ENCODE measurements at regions of chr2 and their contacts with region 1.

Region 1: GRCh38 chr2:226791487-226792081 is 8.0 kb downstream of the IRS1 start:
- DNase-seq: peak; percentile 95
- ATAC-seq: peak; percentile 93

Region 2: DNA sequence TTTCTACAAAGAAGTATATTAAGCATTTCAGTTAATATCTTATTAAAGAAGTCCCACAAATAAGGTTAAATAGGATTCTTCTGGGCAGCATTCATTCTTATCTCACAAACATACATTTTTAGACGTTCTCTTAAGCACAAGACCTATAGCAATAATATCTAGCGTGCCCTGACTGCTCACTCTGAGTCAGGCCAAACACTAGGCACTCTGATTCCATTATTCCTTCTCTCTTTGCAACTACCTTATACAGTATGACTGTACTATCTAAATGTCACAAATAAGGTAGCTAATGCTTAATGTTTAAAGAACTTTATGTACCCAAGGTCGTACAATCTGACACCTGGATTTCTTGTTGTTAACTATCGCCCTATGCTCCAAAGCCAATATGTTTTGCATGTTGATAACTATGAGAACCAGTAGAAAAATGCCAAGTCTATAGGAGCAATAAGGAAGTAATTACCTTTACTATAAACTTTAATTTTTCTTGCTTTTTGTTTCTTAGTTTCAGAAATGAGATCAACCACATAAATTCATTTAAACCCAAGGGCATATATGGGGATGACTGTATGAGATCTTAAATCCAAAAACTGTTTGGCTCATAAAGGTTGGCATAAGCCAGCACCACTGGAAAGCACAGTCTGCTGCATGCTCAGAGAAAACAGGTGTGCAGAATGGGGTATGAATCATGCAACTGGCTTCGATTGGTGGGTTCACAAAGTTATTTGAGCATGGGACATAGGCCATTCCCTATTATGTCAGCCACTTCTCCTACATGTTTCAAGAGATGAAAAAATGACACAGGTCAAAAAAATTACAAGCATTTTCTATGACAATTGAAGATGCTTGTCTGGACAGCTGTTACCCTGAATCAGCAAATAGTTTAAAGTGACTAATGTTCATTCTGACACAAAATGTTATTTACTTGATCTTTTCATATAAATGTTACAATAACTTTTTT is 344.0 kb before region 1 on chr2:
- intact Hi-C with region 1: loop called (anchors 10 kb)
- DNase-seq: no peak
- ATAC-seq: no peak

Region 3: DNA sequence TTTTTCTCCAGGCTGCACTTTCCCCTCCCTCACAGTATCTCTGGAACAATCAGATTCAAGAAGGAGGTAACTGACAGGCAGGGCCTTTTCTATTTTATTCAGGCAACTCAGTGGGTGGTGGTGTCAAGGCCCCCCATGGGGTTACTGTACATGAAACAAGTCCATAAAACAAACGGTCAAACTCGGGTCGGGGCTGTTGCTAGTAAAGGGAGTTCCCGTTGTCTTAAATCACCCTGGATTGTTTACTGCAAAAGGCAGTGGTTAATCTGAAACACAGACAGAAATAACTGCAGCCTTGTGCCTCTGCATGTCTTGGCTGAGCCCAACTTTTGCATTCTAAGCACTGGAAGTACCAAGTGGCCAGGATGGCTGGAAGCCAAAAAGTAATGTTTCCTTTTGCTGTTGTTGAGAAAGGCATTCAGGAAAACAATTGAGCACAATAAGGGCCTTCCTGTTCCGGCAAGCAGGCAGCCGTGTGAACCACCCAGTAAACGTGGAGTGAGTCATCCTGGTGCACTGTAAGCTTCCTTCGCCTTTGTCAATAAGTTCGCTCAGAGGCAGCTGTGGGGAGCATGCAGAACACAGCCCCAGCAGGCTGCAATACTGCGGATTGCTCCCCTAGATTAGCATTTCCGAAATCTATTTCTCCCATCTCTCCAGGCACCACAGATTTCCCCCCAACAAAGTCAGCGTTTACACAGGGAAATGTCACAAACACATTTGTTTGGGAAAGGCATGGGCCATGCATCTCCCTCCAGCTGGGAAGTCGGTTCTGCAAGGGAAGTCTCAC is 141.5 kb before region 1 on chr2:
- intact Hi-C with region 1: loop called (anchors 10 kb)
- DNase-seq: peak; percentile 68
- ATAC-seq: peak; percentile 92

Region 4: DNA sequence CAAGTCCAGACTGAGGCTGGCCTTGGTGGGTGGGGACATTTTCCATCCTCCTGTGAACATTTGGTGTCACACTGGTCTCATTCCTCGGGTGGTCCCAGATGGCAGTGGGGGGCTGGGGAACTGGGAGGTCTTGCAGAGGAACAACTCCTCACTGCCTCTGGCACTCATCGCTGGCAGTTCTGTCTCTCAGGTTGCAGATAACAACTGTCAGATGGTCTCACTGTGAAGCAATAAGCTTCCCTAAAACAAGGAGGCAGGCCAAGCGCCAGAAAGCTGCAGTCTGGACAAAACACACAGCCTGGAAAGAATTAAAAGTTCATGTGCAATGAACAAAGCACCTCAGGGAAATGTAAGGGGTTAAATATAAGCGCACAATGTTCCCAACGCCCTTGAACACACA is 70.0 kb before region 1 on chr2:
- intact Hi-C with region 1: loop called (anchors 10 kb)
- DNase-seq: peak; percentile 63
- ATAC-seq: no peak